CD14-positive monocyte (primary cell): ENCODE measurements at regions of chr4 and their contacts with region 1.

Region 1: GRCh38 chr4:86934771-86935565 is at the start of gene AFF1:
- DNase-seq: peak; percentile 88 to 93 (median 92)
- H3K4me3 ChIP-seq: peak within 1 kb of the TSS; percentile 96 to 98 (median 98)
- H3K4me3 Mint-ChIP-seq: peak within 1 kb of the TSS; percentile 97 to 99
- H3K27ac ChIP-seq: peak within 1 kb of the TSS; percentile 85 to 91
- H3K27ac Mint-ChIP-seq: peak within 1 kb of the TSS; percentile 93 to 98 (median 96)
- H3K4me1 ChIP-seq: peaks cover 50 to 52% of the 10 kb centered on the region in 2 donors
- H3K4me1 Mint-ChIP-seq: peaks cover 45% of the 10 kb centered on the region
- H3K27me3 ChIP-seq: no peaks in the 10 kb centered on the region
- H3K27me3 Mint-ChIP-seq: no peaks in the 10 kb centered on the region
- CTCF ChIP-seq: peak; percentile 36
- polyA plus RNA-seq, gene AFF1: 7.5 to 20.9 (median 16.3) TPM

Region 2: GRCh38 chr4:86972997-86973396 is 38.0 kb after region 1 on chr4:
- intact Hi-C with region 1: loop called in 1 of 2 experiments (anchors 5 kb)
- DNase-seq: no peak
- H3K4me3 ChIP-seq: peak overlapping the region in 1 of 3 experiments; percentile 24
- H3K4me3 Mint-ChIP-seq: peak overlapping the region in 1 of 2 donors; percentile 51
- H3K27ac ChIP-seq: peak overlapping the region; percentile 2 to 64
- H3K27ac Mint-ChIP-seq: peak overlapping the region; percentile 3 to 80 (median 59)
- H3K4me1 ChIP-seq: peaks cover 31 to 42% of the 10 kb centered on the region in 2 donors
- H3K4me1 Mint-ChIP-seq: peaks cover 53% of the 10 kb centered on the region
- H3K27me3 ChIP-seq: no peaks in the 10 kb centered on the region
- H3K27me3 Mint-ChIP-seq: no peaks in the 10 kb centered on the region
- CTCF ChIP-seq: no peak